ENCODE measurements at regions of chr5 and their contacts with region 1.

Region 1: DNA sequence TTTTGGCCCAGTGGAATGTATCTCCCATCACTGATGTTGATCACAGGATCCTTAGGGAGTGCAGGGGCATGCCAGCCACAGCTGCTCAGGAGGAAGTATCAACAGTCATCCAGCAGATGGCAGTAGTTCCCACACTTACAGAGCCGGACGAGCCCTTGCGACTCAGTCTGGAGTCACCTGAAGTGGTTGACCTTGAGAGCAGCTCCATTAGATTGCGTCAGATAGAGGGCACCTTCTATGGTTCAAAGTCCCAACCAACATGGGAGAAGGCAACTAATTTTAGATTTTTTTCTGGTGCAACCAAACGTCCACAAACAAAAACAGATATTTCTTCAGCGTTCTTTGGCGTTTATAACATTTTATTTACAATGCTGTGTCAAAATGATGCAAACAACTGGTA is 124.5 kb downstream of the EGFLAM start:
- DNase-seq: no peak
- H3K4me3 ChIP-seq: no peak overlapping the region
- CTCF ChIP-seq: peak; percentile 89

Region 2: DNA sequence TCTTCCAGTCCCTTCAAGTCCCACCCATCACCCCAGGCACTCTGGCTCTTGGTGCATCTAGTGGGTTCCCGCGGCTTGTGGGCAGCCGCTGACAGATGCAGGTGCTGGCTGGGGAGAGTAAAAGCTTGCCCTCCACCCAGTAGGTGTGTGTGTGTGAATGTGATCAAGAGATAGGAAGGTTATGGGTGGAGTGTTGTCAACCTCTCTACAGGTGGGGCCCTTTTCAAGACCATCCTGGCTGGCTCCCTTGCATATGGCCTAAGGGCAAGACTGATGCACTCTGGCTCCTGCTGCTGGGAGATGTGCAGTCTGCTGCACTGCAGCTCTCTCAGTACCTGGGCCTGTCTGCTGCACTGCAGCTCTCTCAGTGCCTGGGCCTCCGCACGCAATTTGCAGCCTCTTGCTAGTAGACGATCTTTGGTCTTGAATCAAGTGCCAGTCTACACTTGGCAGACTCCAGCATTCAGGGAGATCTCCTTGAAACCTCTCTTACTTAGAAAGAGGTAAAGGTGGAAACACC is 353.4 kb before region 1 on chr5:
- CTCF ChIA-PET with region 1: no interaction called
- POLR2A ChIA-PET with region 1: no interaction called
- DNase-seq: no peak
- H3K4me3 ChIP-seq: no peak overlapping the region
- CTCF ChIP-seq: no peak

Region 3: DNA sequence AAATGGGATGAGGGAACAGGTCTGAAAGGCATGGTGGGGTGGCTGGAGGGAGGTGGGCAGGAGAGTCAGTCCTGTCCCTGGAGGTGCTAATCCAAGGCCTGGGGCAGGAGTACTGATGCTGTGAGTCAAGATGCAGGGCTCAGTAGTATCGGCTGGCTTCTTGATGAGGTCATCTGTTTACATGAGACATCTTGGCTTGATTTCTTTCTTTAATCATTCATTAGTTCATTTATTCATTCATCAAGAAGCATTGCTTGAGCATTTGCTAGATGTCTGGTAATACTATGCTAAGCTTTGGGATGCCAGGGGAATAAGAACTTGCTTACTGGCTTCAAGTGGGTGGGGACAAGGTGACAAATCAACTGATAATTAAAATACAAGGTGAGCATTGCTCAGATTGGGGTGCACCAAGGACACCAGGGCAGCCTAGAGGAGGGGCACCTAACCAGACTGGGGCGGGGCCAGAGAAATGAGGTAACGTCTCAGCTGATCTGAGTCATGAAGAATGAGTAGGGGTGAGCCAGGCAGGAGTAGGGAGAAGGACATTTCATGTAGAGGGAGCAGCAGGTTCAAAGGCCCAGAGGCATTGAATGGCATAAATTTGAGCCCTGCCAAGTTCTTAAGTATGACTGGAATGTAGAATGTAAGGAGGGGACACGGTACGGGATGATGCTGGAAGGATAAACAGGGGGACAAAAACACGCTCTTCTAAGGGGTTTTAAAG is 35.7 kb before region 1 on chr5:
- CTCF ChIA-PET with region 1: no interaction called
- POLR2A ChIA-PET with region 1: no interaction called
- DNase-seq: no peak
- H3K4me3 ChIP-seq: no peak overlapping the region
- CTCF ChIP-seq: no peak

Region 4: DNA sequence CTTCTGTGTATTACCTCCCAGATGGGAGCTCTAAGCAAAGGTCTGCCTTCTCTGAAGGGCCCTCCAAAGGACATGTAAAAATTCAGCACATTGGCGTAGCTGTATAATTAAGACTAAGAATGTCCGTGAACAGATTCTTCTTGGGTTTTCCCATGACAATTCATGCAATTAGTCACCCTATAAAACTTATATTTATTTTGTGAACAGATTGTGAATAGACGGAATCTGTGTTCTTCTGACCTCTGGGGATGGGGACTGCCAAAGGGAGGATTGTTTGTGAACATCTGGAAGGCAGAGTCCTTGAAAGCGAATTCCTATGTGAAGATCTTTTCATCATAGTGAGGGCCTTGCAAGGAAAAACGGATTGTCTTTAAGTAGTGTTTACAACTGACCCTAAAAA is 13.2 kb before region 1 on chr5:
- CTCF ChIA-PET with region 1: interaction called, 12 read pairs
- POLR2A ChIA-PET with region 1: no interaction called
- DNase-seq: no peak
- H3K4me3 ChIP-seq: no peak overlapping the region
- CTCF ChIP-seq: no peak

Region 5: GRCh38 chr5:38404667-38405276 is 21.9 kb after region 1 on chr5:
- CTCF ChIA-PET with region 1: interaction called, 22 read pairs
- POLR2A ChIA-PET with region 1: no interaction called
- DNase-seq: no peak
- H3K4me3 ChIP-seq: no peak overlapping the region
- CTCF ChIP-seq: no peak

Region 6: DNA sequence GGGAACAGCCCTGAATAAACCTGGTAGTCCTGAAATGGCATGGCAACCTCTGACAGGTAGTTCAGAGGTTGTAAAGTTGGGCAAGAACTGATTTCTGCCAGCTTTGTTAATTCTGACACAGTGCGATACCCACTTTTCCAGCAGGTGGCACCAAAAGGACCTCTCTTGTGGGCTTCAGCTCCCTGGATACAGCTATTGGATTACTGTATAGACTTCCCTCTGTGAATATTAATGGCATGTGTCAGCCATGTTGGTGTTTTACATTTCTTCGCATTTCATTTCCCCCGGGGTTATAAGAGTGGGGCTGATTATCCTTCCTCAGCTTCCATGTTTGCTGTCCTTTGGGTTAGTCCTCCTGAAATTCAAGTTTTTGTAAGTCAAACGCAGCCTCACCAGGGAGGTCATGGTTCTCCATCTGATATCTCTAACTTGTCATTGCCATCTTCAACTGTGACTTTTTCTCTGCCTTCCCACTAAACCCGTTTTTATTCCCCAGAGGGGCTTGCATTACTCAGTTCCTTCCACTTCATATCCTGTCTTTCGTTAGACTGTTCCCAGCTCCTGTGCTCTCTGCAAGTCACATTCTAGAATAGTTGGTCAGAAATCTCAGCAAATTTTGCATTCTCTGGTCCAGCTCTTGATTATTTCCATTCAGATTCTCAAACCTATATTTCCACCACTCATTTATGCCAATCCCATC is 37.9 kb after region 1 on chr5:
- CTCF ChIA-PET with region 1: interaction called, 48 read pairs
- POLR2A ChIA-PET with region 1: no interaction called
- DNase-seq: no peak
- H3K4me3 ChIP-seq: no peak overlapping the region
- CTCF ChIP-seq: peak; percentile 78

Region 7: GRCh38 chr5:38551030-38552017 is 168.4 kb after region 1 on chr5:
- CTCF ChIA-PET with region 1: interaction called, 24 read pairs
- POLR2A ChIA-PET with region 1: no interaction called
- DNase-seq: no peak
- H3K4me3 ChIP-seq: no peak overlapping the region
- CTCF ChIP-seq: peak; percentile 71

Region 8: DNA sequence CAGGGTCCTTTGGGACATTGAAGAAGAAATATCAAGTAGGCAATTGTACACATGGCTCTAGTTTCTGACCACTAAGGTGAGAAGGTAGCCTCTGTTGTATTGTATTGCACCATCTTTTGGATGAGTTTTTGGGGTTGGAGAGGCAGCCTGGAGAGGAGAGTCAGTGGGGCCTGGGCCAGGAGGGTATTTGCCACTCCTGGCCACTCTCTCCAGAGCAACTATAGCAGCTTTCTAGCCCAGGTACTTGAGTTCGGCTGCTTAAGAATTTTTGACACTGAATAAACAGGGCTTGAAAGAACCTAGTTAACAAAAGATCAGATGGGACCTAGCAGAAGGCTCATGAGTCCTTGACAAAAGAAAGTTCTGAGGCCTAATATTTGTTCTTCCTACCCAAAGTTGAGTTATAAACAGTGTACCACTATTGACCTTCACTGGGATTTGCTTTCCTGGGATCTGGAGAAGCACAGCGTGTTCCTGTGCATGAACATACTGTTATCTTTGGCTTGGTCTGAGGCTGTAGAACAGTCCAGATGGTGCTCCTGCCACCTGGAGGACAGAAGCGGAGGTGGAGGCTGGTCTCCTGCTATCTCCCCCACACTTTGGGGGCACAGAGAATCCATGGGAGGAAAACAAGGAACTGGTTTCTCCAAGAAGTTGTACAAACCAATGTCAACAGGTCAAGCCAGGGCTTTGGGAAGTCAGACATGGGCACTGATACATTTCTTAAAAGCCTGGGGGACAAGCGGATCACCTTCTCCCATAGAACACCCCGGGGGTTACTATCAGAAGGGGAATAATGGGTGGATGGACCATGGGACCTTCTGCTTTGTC is 284.0 kb after region 1 on chr5:
- CTCF ChIA-PET with region 1: interaction called, 13 read pairs
- POLR2A ChIA-PET with region 1: no interaction called
- DNase-seq: no peak
- H3K4me3 ChIP-seq: no peak overlapping the region
- CTCF ChIP-seq: peak; percentile 70